ENCODE measurements at regions of chr17 and their contacts with region 1.

Region 1: GRCh38 chr17:7045909-7046724 is 2.2 kb upstream of the SLC16A11 start:
- DNase-seq: peak; percentile 51
- H3K4me3 Mint-ChIP-seq: peak overlapping the region; percentile 73
- H3K27ac Mint-ChIP-seq: peak overlapping the region; percentile 63
- H3K4me1 Mint-ChIP-seq: peaks cover 39% of the 10 kb centered on the region
- H3K27me3 Mint-ChIP-seq: peaks cover 24% of the 10 kb centered on the region

Region 2: DNA sequence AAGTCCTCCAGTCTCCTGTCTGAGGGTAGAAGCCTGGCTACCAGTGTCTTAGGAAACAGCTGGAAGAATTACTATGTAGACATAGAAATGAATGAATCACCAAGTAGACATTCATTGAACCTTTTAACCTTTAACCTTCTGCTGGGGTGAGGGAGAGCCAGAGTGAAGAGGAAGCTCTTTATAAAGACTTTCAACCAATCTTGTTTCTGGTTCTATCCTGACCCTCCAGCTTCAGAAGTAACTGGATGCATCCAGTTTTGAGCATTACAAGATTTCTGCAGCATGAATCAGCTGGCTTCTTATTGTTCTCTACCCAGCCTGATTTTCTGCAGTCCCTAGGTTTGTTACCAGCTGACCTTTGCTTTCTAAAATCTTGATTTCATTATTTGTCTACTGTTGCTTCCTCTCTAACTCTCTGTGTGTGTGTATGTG is 223.1 kb before region 1 on chr17:
- CTCF ChIA-PET with region 1: no interaction called
- POLR2A ChIA-PET with region 1: no interaction called
- DNase-seq: no peak
- H3K4me3 Mint-ChIP-seq: no peak overlapping the region
- H3K27ac Mint-ChIP-seq: no peak overlapping the region
- H3K4me1 Mint-ChIP-seq: no peaks in the 10 kb centered on the region
- H3K27me3 Mint-ChIP-seq: peaks cover 43% of the 10 kb centered on the region

Region 3: DNA sequence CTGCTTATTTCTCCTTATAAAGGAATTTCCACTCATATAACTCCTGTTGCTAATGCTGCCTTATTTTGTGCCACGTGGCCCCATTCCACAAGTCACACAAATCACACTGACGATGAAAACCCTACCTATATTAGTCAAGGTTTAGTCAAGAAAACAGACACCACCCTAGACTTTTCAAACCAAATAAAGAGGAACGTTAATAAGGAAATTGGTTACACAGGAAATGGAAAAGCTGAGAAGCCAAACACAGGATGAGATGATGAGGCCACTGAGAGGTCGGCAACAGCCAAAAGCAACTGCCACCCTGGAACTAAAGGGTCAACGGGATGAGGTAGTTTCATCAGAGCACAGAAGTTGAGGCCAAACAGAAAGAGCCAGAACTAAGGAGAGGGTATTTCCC is 97.6 kb before region 1 on chr17:
- CTCF ChIA-PET with region 1: no interaction called
- POLR2A ChIA-PET with region 1: no interaction called
- DNase-seq: no peak
- H3K4me3 Mint-ChIP-seq: no peak overlapping the region
- H3K27ac Mint-ChIP-seq: no peak overlapping the region
- H3K4me1 Mint-ChIP-seq: peaks cover 10% of the 10 kb centered on the region
- H3K27me3 Mint-ChIP-seq: no peaks in the 10 kb centered on the region

Region 4: DNA sequence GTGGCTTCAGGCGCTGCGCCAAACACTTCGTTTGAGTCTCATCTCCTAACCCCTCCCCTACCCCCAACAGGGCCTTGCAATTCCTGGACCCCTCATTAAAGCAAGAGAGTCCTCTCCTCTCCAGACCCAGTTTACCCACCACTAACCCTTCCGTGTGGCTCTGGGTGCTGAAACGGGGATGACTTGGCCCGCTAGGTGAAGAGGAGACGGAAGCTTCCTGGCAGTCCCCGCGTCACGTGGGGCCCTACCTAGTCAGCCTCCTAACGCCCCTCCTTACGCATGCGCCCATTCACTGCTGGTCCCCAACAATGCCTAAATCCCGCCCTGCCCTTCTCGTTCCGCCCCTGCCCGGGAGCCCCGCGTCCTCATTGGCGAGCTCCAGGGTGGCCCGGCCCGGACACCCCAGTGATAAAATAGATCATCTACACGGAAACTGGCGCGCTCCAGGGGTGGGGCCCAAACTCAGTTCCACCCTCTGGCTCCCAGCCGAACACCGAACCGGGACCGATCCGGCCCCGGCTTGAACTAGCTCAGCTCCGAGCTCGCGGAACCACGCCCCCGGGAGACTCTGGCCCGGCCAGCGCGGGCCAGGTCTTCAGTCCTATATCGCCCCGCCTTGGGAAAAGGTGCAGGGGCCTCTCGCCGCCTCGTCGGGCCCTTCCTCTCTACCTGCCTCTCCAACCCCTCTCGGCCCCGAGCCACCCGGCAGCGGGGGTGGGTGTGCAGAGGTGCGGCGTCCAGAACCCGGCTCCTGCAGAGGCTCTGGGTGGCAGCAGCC is 10.3 kb before region 1 on chr17 and contains the start of gene SLC16A13:
- CTCF ChIA-PET with region 1: interaction called, 44 read pairs
- POLR2A ChIA-PET with region 1: interaction called, 34 read pairs
- DNase-seq: peak; percentile 99
- H3K4me3 Mint-ChIP-seq: peak within 1 kb of the TSS; percentile 85
- H3K27ac Mint-ChIP-seq: peak within 1 kb of the TSS; percentile 96
- H3K4me1 Mint-ChIP-seq: peaks cover 60% of the 10 kb centered on the region
- H3K27me3 Mint-ChIP-seq: no peaks in the 10 kb centered on the region
- total RNA-seq, gene SLC16A13: 26.8 to 28.9 TPM

Region 5: GRCh38 chr17:7136266-7136877 is 90.3 kb after region 1 on chr17:
- CTCF ChIA-PET with region 1: interaction called, 290 read pairs
- POLR2A ChIA-PET with region 1: interaction called, 10 read pairs
- DNase-seq: peak; percentile 77
- H3K4me3 Mint-ChIP-seq: no peak overlapping the region
- H3K27ac Mint-ChIP-seq: no peak overlapping the region
- H3K4me1 Mint-ChIP-seq: peaks cover 20% of the 10 kb centered on the region
- H3K27me3 Mint-ChIP-seq: peaks cover 18% of the 10 kb centered on the region

Region 6: GRCh38 chr17:7214300-7215135 is 168.4 kb after region 1 on chr17:
- CTCF ChIA-PET with region 1: interaction called, 13 read pairs
- POLR2A ChIA-PET with region 1: interaction called, 5 read pairs
- DNase-seq: peak; percentile 99
- H3K4me3 Mint-ChIP-seq: peak overlapping the region; percentile 82
- H3K27ac Mint-ChIP-seq: peak overlapping the region; percentile 81
- H3K4me1 Mint-ChIP-seq: peaks cover 47% of the 10 kb centered on the region
- H3K27me3 Mint-ChIP-seq: peaks cover 18% of the 10 kb centered on the region